ENCODE measurements at regions of chr6 and their contacts with region 1.

Region 1: GRCh38 chr6:33711140-33712129 is at the start of gene UQCC2:
- DNase-seq: peak; percentile 98
- ATAC-seq: peak; percentile 99
- H3K4me3 Mint-ChIP-seq: peak within 1 kb of the TSS; percentile 94
- H3K27ac Mint-ChIP-seq: peak within 1 kb of the TSS; percentile 98
- H3K4me1 Mint-ChIP-seq: peaks cover 35% of the 10 kb centered on the region
- H3K27me3 Mint-ChIP-seq: no peaks in the 10 kb centered on the region
- CTCF ChIP-seq: peak; percentile 69
- total RNA-seq, gene UQCC2: 127 to 128 TPM

Region 2: DNA sequence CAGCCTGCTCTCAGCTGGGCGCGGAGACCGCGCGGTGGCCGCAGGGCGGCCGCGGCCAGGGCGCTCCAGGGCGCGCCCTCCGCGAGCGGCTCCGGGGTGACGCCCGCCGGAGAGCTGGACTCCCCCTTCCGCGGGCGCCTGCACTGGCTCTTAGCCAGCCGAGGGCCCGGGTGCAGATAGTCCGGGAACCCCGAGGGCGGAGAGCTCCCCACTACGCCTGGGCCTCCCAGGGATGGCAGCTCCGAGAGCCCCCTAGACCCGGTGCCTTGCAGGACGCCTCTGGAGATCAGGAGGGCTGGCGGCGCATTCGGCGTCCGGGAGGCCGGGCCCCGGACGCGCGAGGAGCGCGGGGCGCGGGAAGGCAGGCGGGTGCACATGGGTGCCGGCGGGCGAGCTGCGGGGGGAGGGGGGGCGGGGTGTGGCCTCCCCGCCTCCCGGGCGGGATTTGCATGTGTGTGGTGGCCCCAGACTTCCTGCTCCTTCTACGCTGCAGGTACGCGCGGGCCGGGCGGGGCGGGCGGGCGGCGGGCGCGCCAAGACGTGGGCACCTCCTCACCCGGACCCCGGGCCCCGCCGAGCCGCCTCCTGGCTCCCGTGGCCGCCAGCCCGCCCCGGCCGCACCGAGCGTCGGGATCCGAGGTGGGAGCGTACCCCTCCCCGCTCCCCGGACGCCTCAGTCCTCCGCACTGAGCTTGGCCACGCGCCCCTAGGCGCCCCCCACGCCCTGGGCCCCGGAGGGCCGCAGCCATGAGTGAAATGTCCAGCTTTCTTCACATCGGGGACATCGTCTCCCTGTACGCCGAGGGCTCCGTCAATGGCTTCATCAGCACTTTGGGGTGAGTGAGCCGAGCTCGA is 90.4 kb before region 1 on chr6 and contains the start of gene ITPR3:
- CTCF ChIA-PET with region 1: interaction called, 7 read pairs
- POLR2A ChIA-PET with region 1: interaction called, 17 read pairs
- intact Hi-C with region 1: no loop called
- DNase-seq: peak; percentile 80
- ATAC-seq: peak; percentile 86
- H3K4me3 Mint-ChIP-seq: peak within 1 kb of the TSS; percentile 88
- H3K27ac Mint-ChIP-seq: peak within 1 kb of the TSS; percentile 88
- H3K4me1 Mint-ChIP-seq: peaks cover 49% of the 10 kb centered on the region
- H3K27me3 Mint-ChIP-seq: no peaks in the 10 kb centered on the region
- CTCF ChIP-seq: no peak
- total RNA-seq, gene ITPR3: 36.6 to 38.0 TPM

Region 3: GRCh38 chr6:33694401-33694931 is 17.0 kb before region 1 on chr6:
- CTCF ChIA-PET with region 1: interaction called, 12 read pairs
- POLR2A ChIA-PET with region 1: interaction called, 33 read pairs
- intact Hi-C with region 1: no loop called
- DNase-seq: peak; percentile 88
- ATAC-seq: peak; percentile 83
- H3K4me3 Mint-ChIP-seq: peak overlapping the region; percentile 29
- H3K27ac Mint-ChIP-seq: peak overlapping the region; percentile 79
- H3K4me1 Mint-ChIP-seq: peaks cover 72% of the 10 kb centered on the region
- H3K27me3 Mint-ChIP-seq: no peaks in the 10 kb centered on the region
- CTCF ChIP-seq: no peak

Region 4: GRCh38 chr6:33700391-33701050 is 10.9 kb before region 1 on chr6:
- CTCF ChIA-PET with region 1: interaction called, 44 read pairs
- POLR2A ChIA-PET with region 1: interaction called, 33 read pairs
- intact Hi-C with region 1: no loop called
- DNase-seq: peak; percentile 86
- ATAC-seq: peak; percentile 87
- H3K4me3 Mint-ChIP-seq: no peak overlapping the region
- H3K27ac Mint-ChIP-seq: peak overlapping the region; percentile 37
- H3K4me1 Mint-ChIP-seq: peaks cover 35% of the 10 kb centered on the region
- H3K27me3 Mint-ChIP-seq: no peaks in the 10 kb centered on the region
- CTCF ChIP-seq: peak; percentile 82

Region 5: DNA sequence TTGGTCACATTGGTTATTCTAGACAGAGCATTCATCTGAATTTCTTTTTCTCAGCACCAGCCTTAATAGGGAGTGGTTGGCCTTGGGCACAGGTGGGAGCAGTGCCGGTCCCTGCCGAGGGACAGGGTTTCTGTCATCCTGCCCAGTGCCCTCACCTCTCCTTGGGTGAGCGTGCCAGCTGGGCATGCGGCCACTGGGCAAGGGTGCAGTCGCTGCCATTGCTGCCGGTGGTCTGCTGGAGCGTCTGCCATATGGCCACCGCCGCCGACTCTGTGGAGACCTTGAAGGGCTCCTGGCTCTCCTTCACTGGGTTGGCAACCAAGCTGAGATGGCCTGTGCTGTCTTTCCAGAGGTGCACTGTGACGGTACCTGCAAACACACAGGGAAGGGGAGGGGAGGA is 16.5 kb after region 1 on chr6:
- CTCF ChIA-PET with region 1: interaction called, 27 read pairs
- POLR2A ChIA-PET with region 1: interaction called, 5 read pairs
- intact Hi-C with region 1: no loop called
- DNase-seq: no peak
- ATAC-seq: no peak
- H3K4me3 Mint-ChIP-seq: no peak overlapping the region
- H3K27ac Mint-ChIP-seq: no peak overlapping the region
- H3K4me1 Mint-ChIP-seq: peaks cover 13% of the 10 kb centered on the region
- H3K27me3 Mint-ChIP-seq: no peaks in the 10 kb centered on the region
- CTCF ChIP-seq: no peak

Region 6: GRCh38 chr6:33744001-33744848 is 32.8 kb after region 1 on chr6:
- CTCF ChIA-PET with region 1: interaction called, 20 read pairs
- POLR2A ChIA-PET with region 1: interaction called, 3 read pairs
- intact Hi-C with region 1: no loop called
- DNase-seq: peak; percentile 87
- ATAC-seq: peak; percentile 87
- H3K4me3 Mint-ChIP-seq: no peak overlapping the region
- H3K27ac Mint-ChIP-seq: no peak overlapping the region
- H3K4me1 Mint-ChIP-seq: peaks cover 2% of the 10 kb centered on the region
- H3K27me3 Mint-ChIP-seq: peaks cover 5% of the 10 kb centered on the region
- CTCF ChIP-seq: peak; percentile 84

Region 7: DNA sequence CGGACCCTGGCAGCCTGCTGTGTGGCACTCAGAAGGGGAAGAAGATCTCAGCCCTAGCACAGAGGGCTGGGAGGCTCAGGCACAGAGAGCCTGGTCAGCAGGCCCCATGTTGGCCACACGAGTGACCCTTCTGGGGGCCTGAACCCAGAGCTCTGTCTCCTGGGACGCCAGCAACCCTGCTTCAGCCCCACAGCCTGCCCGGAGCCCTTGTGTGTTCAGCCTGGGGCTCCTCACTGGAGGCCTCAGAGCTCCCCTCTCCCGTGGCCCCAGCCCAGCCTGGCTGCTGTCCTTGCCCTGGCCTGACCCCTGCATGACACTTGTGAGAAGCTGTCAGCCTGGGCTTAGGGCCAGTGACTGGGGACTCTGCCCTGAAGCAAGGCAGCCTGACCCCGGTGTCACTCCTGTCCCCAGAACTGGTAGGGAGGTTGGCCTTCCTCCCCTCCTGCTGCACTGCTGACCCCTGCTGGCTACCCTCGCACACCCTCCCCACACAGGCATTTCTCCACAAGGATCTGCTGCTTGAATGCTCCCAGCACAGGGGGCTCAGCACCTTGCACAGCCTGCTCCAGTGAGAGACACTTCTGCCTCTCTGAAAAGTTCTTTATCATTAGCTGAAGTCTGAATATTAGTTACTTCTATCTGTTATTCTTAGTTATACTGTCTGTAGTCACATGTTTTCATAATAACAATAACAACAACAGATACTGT is 50.6 kb after region 1 on chr6:
- CTCF ChIA-PET with region 1: interaction called, 26 read pairs
- POLR2A ChIA-PET with region 1: no interaction called
- intact Hi-C with region 1: no loop called
- DNase-seq: peak; percentile 68
- ATAC-seq: peak; percentile 87
- H3K4me3 Mint-ChIP-seq: no peak overlapping the region
- H3K27ac Mint-ChIP-seq: no peak overlapping the region
- H3K4me1 Mint-ChIP-seq: peaks cover 5% of the 10 kb centered on the region
- H3K27me3 Mint-ChIP-seq: peaks cover 4% of the 10 kb centered on the region
- CTCF ChIP-seq: peak; percentile 56

Region 8: GRCh38 chr6:33794891-33795623 is 83.6 kb after region 1 on chr6:
- CTCF ChIA-PET with region 1: no interaction called
- POLR2A ChIA-PET with region 1: no interaction called
- intact Hi-C with region 1: no loop called
- DNase-seq: no peak
- ATAC-seq: no peak
- H3K4me3 Mint-ChIP-seq: no peak overlapping the region
- H3K27ac Mint-ChIP-seq: no peak overlapping the region
- H3K4me1 Mint-ChIP-seq: no peaks in the 10 kb centered on the region
- H3K27me3 Mint-ChIP-seq: peaks cover 10% of the 10 kb centered on the region
- CTCF ChIP-seq: no peak

Measured in activated CD8-positive, alpha-beta T cell treated with anti-CD3 and anti-CD28 coated beads for 36 hours (primary cell).